Activated CD8-positive, alpha-beta memory T cell treated with anti-CD3 and anti-CD28 coated beads, Interleukin-2, amount 10 ng/mL, durations not matched to agents 7 days and 5 days (primary cell): ENCODE measurements at regions of chr14 and their contacts with region 1.

Region 1: GRCh38 chr14:22994762-22995275 is 12.5 kb upstream of the AJUBA start:
- DNase-seq: no peak
- ATAC-seq: peak; percentile 73
- H3K4me3 Mint-ChIP-seq: no peak overlapping the region
- H3K27ac Mint-ChIP-seq: no peak overlapping the region
- H3K4me1 Mint-ChIP-seq: no peaks in the 10 kb centered on the region
- H3K27me3 Mint-ChIP-seq: no peaks in the 10 kb centered on the region

Region 2: GRCh38 chr14:22973217-22974032 is 21.4 kb before region 1 on chr14:
- CTCF ChIA-PET with region 1: interaction called, 200 read pairs
- DNase-seq: peak; percentile 52
- ATAC-seq: peak; percentile 51
- H3K4me3 Mint-ChIP-seq: no peak overlapping the region
- H3K27ac Mint-ChIP-seq: no peak overlapping the region
- H3K4me1 Mint-ChIP-seq: no peaks in the 10 kb centered on the region
- H3K27me3 Mint-ChIP-seq: peaks cover 14% of the 10 kb centered on the region

Region 3: DNA sequence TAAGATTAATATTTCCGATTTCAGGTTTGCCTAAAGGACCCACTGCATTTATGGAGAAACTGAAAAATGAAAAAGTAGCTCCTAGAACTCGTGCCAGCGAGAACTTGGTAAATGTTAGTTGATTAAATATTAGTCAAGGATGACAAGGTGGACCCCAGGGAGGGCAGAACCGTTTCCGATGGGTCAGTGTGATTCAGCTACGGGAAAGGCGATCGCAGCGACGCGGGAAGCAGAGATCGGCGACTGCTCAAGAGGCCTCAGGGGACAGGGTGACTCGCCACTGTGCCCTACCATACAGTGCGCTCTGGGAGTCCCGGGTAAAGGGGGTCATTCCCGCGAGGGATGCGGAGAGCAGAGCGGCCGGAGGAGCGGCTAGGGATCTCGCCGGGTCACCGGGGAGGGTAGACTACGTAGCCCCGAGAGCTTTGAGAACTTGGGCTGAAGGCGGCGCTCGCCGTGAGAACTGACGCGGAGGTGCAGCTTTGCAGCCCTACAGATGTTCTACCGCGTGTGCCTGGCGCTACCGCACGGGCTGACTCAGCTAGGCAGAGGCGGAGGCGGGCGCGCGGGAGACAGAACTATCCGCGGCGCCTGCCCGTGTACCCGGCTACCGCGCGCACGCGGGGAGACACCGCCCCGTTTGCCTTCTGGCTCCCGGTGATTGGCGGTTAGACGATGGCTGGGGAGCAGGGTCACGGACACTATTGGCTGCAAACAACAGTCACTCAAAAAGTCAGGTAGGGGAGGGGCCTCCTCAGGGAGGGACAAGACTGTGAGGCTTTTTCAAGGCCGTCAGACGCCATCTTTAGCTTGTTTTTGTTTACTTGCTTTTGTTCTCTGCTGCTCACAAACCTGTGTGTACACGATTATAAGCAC is 12.0 kb after region 1 on chr14:
- CTCF ChIA-PET with region 1: interaction called, 57 read pairs
- DNase-seq: peak; percentile 98
- ATAC-seq: peak; percentile 97
- H3K4me3 Mint-ChIP-seq: peak overlapping the region; percentile 93
- H3K27ac Mint-ChIP-seq: peak overlapping the region; percentile 96
- H3K4me1 Mint-ChIP-seq: peaks cover 44% of the 10 kb centered on the region
- H3K27me3 Mint-ChIP-seq: no peaks in the 10 kb centered on the region

Region 4: DNA sequence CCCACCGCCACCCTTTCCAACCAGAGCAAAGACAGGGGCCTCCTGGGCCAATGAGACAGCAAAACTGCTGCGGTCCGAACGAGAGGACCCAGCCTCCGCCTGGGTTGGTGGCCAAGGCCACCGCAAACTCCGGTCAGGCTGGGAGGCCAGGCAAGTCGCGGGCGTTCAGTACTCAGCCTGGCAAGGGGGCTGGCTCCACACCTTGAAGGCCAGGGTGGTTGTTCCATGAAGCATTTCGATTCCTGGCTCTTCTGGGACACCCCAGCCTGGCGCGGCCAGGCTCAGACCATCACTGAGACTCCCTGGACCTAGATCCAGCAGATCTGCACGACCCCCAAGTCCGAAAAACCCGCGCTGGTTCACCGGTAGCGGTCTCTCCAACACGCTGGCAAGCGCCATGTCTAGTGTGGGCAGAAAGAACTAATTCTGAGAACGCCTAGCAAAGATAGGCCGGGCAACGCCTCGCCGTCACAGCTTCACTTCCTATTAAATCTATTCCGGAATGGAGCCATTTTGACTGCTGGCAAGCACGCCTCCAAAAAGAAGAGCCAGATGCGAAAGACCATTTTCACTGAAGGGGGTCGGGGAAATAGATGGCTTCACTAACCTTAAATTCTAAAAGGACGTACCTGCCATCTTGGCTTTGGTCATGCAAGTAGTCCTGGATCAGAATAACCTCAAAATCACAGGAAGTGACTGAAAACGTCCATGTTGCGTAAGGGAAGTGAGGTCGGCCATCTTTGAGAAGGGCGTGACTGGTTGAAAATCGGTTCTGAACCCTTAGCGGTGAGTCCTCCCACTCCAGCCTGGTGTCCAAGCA is 39.9 kb after region 1 on chr14 and contains the start of gene PSMB5:
- CTCF ChIA-PET with region 1: interaction called, 14 read pairs
- DNase-seq: peak; percentile 95
- ATAC-seq: peak; percentile 95
- H3K4me3 Mint-ChIP-seq: peak within 1 kb of the TSS; percentile 83
- H3K27ac Mint-ChIP-seq: peak within 1 kb of the TSS; percentile 95
- H3K4me1 Mint-ChIP-seq: peaks cover 27% of the 10 kb centered on the region
- H3K27me3 Mint-ChIP-seq: peaks cover 3% of the 10 kb centered on the region
- total RNA-seq, gene PSMB5: 66.7 to 95.3 TPM